Breast epithelium (tissue), 4 donors: ENCODE measurements at regions of chr12 and their contacts with region 1.

Region 1: GRCh38 chr12:51622564-51622963 is 31.5 kb downstream of the SCN8A start:
- DNase-seq: no peak
- H3K4me3 ChIP-seq: no peak overlapping the region
- H3K27ac ChIP-seq: no peak overlapping the region
- H3K4me1 ChIP-seq: no peaks in the 10 kb centered on the region
- H3K27me3 ChIP-seq: no peaks in the 10 kb centered on the region
- CTCF ChIP-seq: no peak
- POLR2A ChIP-seq: no peak

Region 2: DNA sequence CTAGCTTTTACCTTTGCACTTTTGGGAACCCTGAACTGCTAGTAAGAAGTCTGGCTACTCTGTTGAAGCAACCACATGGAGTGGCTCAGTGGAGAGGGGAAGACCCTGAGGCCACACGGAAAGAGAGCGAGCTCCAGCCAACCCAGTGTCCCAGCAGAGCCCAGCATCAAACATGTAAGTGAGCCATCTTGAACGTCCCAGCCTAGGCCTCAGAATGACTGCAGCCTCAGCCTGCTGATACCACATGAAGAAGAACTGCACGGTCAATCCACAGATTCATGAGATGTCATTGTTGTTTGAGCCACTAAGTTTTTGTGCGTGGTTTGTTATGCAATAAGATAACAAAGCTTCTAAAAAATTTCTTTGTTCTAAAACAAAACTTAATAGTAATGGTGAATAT is 489.9 kb before region 1 on chr12:
- intact Hi-C with region 1: loop called (anchors 5 kb)
- DNase-seq: no peak
- H3K4me3 ChIP-seq: no peak overlapping the region
- H3K27ac ChIP-seq: no peak overlapping the region
- H3K4me1 ChIP-seq: no peaks in the 10 kb centered on the region
- H3K27me3 ChIP-seq: no peaks in the 10 kb centered on the region
- CTCF ChIP-seq: no peak
- POLR2A ChIP-seq: no peak